ENCODE measurements at regions of chr17 and their contacts with region 1.

Region 1: GRCh38 chr17:7045909-7046724 is 2.2 kb upstream of the SLC16A11 start:
- DNase-seq: no peak
- ATAC-seq: peak; percentile 60

Region 2: GRCh38 chr17:6627019-6627418 is 419.1 kb before region 1 on chr17:
- intact Hi-C with region 1: no loop called
- DNase-seq: no peak
- ATAC-seq: no peak

Region 3: GRCh38 chr17:6995431-6996255 is 50.5 kb before region 1 on chr17 and contains the start of gene ALOX12:
- intact Hi-C with region 1: no loop called
- DNase-seq: no peak
- ATAC-seq: peak; percentile 41
- total RNA-seq, gene ALOX12: not detected

Region 4: DNA sequence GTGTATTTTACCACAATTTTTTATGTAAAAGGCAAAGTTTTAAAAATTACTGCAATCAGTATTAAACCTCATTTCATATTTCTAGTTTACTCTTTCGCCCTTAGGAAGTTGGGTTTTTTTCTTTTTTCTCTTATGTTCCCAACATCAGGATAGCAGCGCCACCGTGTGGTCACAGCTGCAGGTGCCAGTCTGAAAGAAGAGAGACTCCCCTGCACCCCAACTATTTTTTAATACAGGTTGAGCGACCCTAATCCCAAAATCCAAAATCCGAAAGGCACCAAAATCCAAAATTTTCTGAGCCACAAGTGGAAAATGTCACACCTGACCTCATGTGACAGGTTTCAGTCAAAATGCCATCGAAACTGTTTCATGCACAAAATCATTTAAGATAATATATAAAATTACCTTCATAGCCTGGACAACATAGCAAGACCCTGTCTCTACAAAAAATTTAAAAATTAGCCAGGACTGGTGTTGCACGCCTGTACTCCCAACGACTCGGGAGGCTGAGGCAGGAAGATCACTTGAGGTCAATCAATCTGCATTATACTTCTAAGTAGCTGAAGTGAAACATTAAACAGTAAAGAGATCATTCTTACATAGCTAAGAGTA is 90.3 kb after region 1 on chr17:
- intact Hi-C with region 1: loop called (anchors 5 kb)
- DNase-seq: peak; percentile 89
- ATAC-seq: peak; percentile 52